ENCODE measurements at regions of chr7 and their contacts with region 1.

Region 1: DNA sequence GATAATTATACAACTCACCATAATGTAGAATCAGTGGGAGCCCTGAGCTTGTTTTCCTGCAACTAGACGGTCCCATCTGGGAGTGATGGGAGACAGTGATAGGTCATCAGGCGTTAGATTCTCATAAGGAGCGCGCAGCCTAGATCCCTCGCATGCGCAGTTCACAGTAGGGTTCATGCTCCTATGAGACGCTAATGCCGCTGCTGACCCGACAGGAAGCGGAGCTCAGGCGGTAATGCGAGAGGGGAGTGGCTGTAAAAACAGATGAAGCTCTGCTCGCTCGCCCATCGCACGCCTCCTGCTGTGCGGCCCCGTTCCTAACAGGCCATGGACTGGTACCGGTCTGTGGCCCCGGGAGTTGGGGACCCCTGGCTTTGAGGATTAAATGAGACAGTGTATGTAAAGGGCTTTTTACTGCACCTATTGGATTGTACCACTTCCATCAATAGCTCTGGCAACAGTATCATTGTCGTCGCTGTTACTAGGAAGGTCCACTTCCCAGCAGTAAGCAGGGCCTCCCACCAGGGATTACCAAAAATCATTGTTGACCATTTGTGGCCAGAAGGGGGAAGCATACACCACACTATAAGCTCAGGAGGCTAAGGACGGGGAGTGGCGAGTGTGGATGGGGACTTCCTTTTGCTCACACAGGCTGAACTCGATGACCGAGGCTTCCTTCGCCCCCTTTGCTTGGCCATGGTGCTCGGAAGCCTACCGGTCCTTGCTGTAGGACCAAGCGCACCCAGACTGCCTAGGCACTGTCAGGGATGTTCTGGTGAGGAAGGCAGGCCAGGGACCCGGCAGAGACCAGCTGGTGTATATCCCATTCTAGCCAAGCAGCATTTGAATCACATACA is 26.4 kb downstream of the AKR1B1 start:
- DNase-seq: peak; percentile 68 to 72 (median 69)
- H3K4me3 ChIP-seq: peak overlapping the region in 1 of 2 donors; percentile 30
- H3K4me3 Mint-ChIP-seq: peak overlapping the region; percentile 79 to 93 (median 85)
- H3K27ac ChIP-seq: peak overlapping the region; percentile 21
- H3K27ac Mint-ChIP-seq: peak overlapping the region; percentile 85 to 94 (median 92)
- H3K4me1 ChIP-seq: peaks cover 13% of the 10 kb centered on the region
- H3K4me1 Mint-ChIP-seq: peaks cover 8 to 14% (median 10%) of the 10 kb centered on the region in 4 donors
- H3K27me3 ChIP-seq: no peaks in the 10 kb centered on the region
- H3K27me3 Mint-ChIP-seq: peaks cover 2 to 3% of the 10 kb centered on the region in 2 donors

Region 2: DNA sequence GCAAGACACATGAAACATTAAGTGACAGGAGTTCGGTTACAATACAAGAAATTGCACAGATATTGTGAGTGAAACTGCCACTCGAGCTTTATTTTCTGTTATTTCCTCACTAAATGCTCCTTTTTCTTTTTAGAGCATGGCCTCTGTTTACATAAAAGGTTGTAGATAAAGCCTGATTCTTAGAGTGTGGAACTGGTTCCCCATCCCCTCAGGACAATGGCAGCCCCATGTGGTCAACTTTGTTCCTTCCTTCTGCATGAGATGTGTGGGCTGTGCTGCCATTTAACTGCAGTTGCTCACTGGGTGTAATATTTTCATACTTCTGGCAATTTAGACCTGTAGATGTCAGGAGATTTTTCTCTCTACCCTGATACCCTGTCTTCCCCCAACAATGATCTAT is 235.2 kb before region 1 on chr7:
- CTCF ChIA-PET with region 1: no interaction called
- POLR2A ChIA-PET with region 1: no interaction called
- intact Hi-C with region 1: no loop called
- DNase-seq: no peak
- H3K4me3 ChIP-seq: no peak overlapping the region
- H3K4me3 Mint-ChIP-seq: no peak overlapping the region
- H3K27ac ChIP-seq: no peak overlapping the region
- H3K27ac Mint-ChIP-seq: no peak overlapping the region
- H3K4me1 ChIP-seq: no peaks in the 10 kb centered on the region
- H3K4me1 Mint-ChIP-seq: peaks cover 0 to 1% (median 0%) of the 10 kb centered on the region in 4 donors
- H3K27me3 ChIP-seq: no peaks in the 10 kb centered on the region
- H3K27me3 Mint-ChIP-seq: no peaks in the 10 kb centered on the region

Region 3: DNA sequence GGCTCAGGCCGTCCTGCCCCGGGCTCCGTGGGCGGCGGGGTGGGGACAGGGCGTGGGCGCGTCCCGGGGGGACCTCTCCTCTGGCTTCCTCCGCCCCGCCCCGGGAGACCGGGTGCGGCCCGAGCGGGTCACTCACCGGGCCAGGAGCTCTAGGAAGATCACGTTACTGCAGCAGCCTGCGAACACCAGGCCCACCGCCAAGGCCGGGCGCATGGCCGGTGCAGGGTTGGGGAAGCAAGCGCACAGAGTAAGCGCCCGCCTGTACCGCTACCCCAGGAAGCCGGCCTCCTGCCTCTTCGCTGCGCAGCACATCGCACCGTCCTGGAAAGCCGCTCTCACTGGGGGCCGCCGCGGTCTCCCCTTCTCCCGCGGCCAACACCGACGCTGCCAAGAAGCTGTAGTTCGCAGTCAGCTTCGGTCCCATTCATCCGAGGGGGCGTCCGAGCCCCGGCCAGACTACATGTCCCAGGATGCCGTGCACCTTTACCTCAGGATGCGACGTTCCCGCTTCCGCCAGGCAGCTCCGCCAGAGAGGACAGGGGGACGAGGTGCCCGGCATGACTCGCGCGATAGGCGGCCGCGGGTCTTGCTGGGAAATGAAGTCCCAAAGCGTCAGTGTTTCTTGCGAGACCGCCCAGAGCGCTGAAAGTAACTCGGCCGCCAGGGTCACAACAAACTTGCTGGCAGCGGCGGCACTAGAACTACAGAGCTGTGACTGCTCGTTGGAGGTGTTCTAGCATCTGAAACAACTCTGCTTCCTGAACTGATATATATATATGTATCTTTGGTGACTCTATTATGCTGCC is 115.8 kb before region 1 on chr7 and contains the start of gene SLC35B4:
- CTCF ChIA-PET with region 1: interaction called, 7 read pairs
- POLR2A ChIA-PET with region 1: interaction called, 5 read pairs
- intact Hi-C with region 1: loop called (anchors 2 kb)
- DNase-seq: peak; percentile 90 to 96 (median 93)
- H3K4me3 ChIP-seq: peak within 1 kb of the TSS; percentile 2 to 81
- H3K4me3 Mint-ChIP-seq: peak within 1 kb of the TSS; percentile 95 to 98 (median 96)
- H3K27ac ChIP-seq: peak within 1 kb of the TSS; percentile 59
- H3K27ac Mint-ChIP-seq: peak within 1 kb of the TSS; percentile 83 to 97 (median 92)
- H3K4me1 ChIP-seq: peaks cover 17% of the 10 kb centered on the region
- H3K4me1 Mint-ChIP-seq: peaks cover 12 to 24% (median 17%) of the 10 kb centered on the region in 4 donors
- H3K27me3 ChIP-seq: no peaks in the 10 kb centered on the region
- H3K27me3 Mint-ChIP-seq: peaks cover 2% of the 10 kb centered on the region in 2 donors
- total RNA-seq, gene SLC35B4: 10.5 to 10.7 TPM

Region 4: GRCh38 chr7:134414109-134414508 is 18.4 kb before region 1 on chr7:
- CTCF ChIA-PET with region 1: no interaction called
- POLR2A ChIA-PET with region 1: no interaction called
- intact Hi-C with region 1: no loop called
- DNase-seq: no peak
- H3K4me3 ChIP-seq: no peak overlapping the region
- H3K4me3 Mint-ChIP-seq: no peak overlapping the region
- H3K27ac ChIP-seq: no peak overlapping the region
- H3K27ac Mint-ChIP-seq: no peak overlapping the region
- H3K4me1 ChIP-seq: no peaks in the 10 kb centered on the region
- H3K4me1 Mint-ChIP-seq: no peaks in the 10 kb centered on the region
- H3K27me3 ChIP-seq: no peaks in the 10 kb centered on the region
- H3K27me3 Mint-ChIP-seq: peaks cover 2 to 7% of the 10 kb centered on the region in 2 donors

Region 5: DNA sequence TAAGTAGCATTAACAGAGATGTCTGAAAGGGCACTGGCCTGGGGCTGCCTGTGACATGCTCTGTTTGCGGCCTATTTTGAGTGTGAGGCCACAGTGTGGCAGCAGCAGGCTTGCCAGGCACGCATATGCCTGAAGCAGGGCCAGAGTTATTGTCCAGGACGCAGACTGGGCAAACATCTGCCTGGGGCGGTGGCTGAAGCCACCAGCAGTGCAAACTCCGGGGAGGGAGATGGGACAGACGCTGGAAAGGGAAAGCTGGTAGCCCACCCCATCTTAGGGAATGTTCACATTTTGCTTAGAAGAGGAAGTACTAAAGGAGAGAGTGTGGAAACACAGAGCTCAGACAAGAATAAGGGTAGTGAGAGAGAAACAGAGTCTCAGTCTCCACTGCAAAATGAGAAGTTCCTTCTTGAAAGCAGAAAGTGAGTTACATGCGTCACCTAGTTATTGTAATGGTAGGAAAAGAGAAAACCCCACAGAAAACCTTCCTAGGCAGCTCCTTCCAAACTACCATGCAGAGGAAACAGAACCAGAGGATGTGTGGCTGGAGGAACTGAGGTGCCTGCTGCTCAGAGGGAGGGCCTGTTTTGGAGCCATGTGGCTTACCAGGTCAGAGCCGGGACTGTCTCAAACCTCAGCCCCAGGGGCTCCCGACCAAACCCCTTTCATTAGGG is 11.8 kb after region 1 on chr7:
- CTCF ChIA-PET with region 1: interaction called, 15 read pairs
- POLR2A ChIA-PET with region 1: interaction called, 3 read pairs
- intact Hi-C with region 1: no loop called
- DNase-seq: no peak
- H3K4me3 ChIP-seq: no peak overlapping the region
- H3K4me3 Mint-ChIP-seq: no peak overlapping the region
- H3K27ac ChIP-seq: no peak overlapping the region
- H3K27ac Mint-ChIP-seq: peak overlapping the region in 1 of 7 donors; percentile 59
- H3K4me1 ChIP-seq: no peaks in the 10 kb centered on the region
- H3K4me1 Mint-ChIP-seq: no peaks in the 10 kb centered on the region
- H3K27me3 ChIP-seq: no peaks in the 10 kb centered on the region
- H3K27me3 Mint-ChIP-seq: no peaks in the 10 kb centered on the region

Region 6: DNA sequence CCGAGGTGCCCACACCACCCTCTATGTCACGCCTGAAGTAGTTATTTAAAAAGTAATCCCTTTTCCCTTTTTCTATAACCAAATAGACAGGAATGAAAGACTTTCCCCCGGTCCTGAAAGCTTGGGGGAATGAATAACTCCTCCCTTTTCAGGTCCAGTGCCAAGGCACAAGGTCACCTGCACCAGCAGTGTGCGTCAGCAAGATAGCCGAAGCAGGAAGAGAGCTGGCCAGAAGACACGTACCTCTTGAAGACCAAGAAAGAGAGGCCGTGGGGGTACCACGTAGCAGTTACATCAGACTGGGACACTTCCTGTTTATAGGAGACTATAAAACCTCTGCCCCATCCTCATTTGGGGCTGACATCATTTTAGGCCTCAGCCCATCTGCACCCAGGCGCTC is 37.1 kb after region 1 on chr7:
- CTCF ChIA-PET with region 1: no interaction called
- POLR2A ChIA-PET with region 1: no interaction called
- intact Hi-C with region 1: no loop called
- DNase-seq: no peak
- H3K4me3 ChIP-seq: no peak overlapping the region
- H3K4me3 Mint-ChIP-seq: no peak overlapping the region
- H3K27ac ChIP-seq: no peak overlapping the region
- H3K27ac Mint-ChIP-seq: no peak overlapping the region
- H3K4me1 ChIP-seq: no peaks in the 10 kb centered on the region
- H3K4me1 Mint-ChIP-seq: no peaks in the 10 kb centered on the region
- H3K27me3 ChIP-seq: no peaks in the 10 kb centered on the region
- H3K27me3 Mint-ChIP-seq: peaks cover 0 to 3% of the 10 kb centered on the region in 2 donors

Region 7: GRCh38 chr7:134480736-134481135 is 48.2 kb after region 1 on chr7:
- CTCF ChIA-PET with region 1: interaction called, 26 read pairs
- POLR2A ChIA-PET with region 1: no interaction called
- intact Hi-C with region 1: no loop called
- DNase-seq: no peak
- H3K4me3 ChIP-seq: no peak overlapping the region
- H3K4me3 Mint-ChIP-seq: no peak overlapping the region
- H3K27ac ChIP-seq: no peak overlapping the region
- H3K27ac Mint-ChIP-seq: no peak overlapping the region
- H3K4me1 ChIP-seq: no peaks in the 10 kb centered on the region
- H3K4me1 Mint-ChIP-seq: no peaks in the 10 kb centered on the region
- H3K27me3 ChIP-seq: no peaks in the 10 kb centered on the region
- H3K27me3 Mint-ChIP-seq: peaks cover 12 to 13% of the 10 kb centered on the region in 2 donors

Region 8: DNA sequence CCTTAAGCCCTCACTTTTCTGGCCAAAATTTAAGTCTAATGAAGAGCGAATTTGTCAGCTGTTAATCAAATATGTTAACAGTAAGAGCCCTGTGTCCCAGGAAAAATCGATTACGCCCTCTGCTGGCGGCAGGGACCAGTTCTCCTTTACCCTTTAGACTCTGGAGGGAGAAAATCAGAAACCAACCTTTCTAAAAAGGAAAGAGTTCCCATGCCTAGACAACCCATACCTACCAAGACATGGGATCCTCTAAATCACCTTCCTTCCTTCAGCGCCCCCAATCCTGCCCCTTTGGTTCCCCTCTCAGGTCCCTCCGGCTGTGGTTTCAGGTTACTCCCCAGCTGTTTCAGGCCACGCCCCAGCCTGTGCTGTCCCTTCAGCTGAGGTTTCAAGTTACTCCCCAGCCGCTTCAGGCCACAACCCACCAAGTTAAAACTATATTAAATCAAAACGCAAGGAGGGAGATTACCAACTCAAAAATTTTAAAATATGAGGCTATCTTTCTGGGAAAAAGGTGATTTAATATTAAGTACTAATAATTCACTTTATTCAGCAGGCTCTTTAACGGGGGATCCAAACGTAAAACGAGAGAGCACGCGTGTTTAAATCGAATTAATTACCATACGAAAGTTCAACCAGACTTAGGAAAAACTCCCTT is 115.0 kb after region 1 on chr7:
- CTCF ChIA-PET with region 1: interaction called, 209 read pairs
- POLR2A ChIA-PET with region 1: interaction called, 3 read pairs
- intact Hi-C with region 1: loop called (anchors 1 kb)
- DNase-seq: peak; percentile 46 to 54 (median 52)
- H3K4me3 ChIP-seq: no peak overlapping the region
- H3K4me3 Mint-ChIP-seq: peak overlapping the region in 3 of 8 donors; percentile 5 to 14 (median 11)
- H3K27ac ChIP-seq: no peak overlapping the region
- H3K27ac Mint-ChIP-seq: no peak overlapping the region
- H3K4me1 ChIP-seq: no peaks in the 10 kb centered on the region
- H3K4me1 Mint-ChIP-seq: peaks cover 0 to 2% (median 0%) of the 10 kb centered on the region in 4 donors
- H3K27me3 ChIP-seq: no peaks in the 10 kb centered on the region
- H3K27me3 Mint-ChIP-seq: peaks cover 12 to 15% of the 10 kb centered on the region in 2 donors

Region 9: DNA sequence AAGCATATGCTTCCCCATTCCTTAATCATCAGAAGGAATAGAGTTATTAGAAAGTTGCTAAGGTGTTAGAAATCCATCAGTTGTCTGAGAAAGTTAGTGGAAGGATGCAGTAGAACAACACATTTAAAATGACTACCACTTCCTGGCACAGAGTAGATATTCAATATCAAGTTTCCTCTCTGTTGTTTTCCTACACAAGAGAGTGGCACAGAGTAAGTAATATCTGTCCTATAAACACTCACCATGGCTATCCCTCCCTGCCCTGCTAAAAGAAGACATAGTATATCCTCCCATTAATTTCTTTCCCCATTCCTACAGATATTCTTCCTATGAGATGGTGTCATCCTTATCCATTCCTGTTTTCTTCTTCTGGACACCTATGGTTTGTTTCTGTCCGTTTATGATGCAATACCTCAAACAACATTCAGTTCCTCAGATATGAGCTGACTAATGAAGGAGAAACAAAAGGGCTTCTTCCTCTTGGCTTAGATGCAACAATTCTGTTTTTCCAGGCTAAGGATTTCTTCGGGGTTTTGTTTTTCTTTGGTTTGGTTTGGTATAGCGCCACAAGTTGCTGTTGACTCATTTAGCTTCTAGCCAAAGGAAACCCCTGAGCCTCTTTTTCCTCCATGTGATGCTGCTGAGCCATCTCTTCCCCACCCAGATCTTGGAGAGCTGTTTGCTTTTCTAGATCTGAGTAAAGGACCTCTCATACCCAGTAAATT is 181.3 kb after region 1 on chr7:
- CTCF ChIA-PET with region 1: interaction called, 75 read pairs
- POLR2A ChIA-PET with region 1: no interaction called
- intact Hi-C with region 1: no loop called
- DNase-seq: no peak
- H3K4me3 ChIP-seq: no peak overlapping the region
- H3K4me3 Mint-ChIP-seq: no peak overlapping the region
- H3K27ac ChIP-seq: no peak overlapping the region
- H3K27ac Mint-ChIP-seq: no peak overlapping the region
- H3K4me1 ChIP-seq: no peaks in the 10 kb centered on the region
- H3K4me1 Mint-ChIP-seq: peaks cover 0 to 2% (median 0%) of the 10 kb centered on the region in 4 donors
- H3K27me3 ChIP-seq: no peaks in the 10 kb centered on the region
- H3K27me3 Mint-ChIP-seq: peaks cover 20 to 21% of the 10 kb centered on the region in 2 donors

Region 10: GRCh38 chr7:134954197-134955082 is 521.9 kb after region 1 on chr7:
- CTCF ChIA-PET with region 1: interaction called, 5 read pairs
- POLR2A ChIA-PET with region 1: no interaction called
- intact Hi-C with region 1: loop called (anchors 10 kb)
- DNase-seq: peak in 4 of 5 donors; percentile 24 to 39 (median 30)
- H3K4me3 ChIP-seq: no peak overlapping the region
- H3K4me3 Mint-ChIP-seq: no peak overlapping the region
- H3K27ac ChIP-seq: no peak overlapping the region
- H3K27ac Mint-ChIP-seq: peak overlapping the region in 1 of 7 donors; percentile 40
- H3K4me1 ChIP-seq: no peaks in the 10 kb centered on the region
- H3K4me1 Mint-ChIP-seq: no peaks in the 10 kb centered on the region
- H3K27me3 ChIP-seq: no peaks in the 10 kb centered on the region
- H3K27me3 Mint-ChIP-seq: no peaks in the 10 kb centered on the region

Measured in CD4-positive, alpha-beta memory T cell (primary cell).